Aorta (tissue), 5 donors: ENCODE measurements at regions of chr9 and their contacts with region 1.

Region 1: DNA sequence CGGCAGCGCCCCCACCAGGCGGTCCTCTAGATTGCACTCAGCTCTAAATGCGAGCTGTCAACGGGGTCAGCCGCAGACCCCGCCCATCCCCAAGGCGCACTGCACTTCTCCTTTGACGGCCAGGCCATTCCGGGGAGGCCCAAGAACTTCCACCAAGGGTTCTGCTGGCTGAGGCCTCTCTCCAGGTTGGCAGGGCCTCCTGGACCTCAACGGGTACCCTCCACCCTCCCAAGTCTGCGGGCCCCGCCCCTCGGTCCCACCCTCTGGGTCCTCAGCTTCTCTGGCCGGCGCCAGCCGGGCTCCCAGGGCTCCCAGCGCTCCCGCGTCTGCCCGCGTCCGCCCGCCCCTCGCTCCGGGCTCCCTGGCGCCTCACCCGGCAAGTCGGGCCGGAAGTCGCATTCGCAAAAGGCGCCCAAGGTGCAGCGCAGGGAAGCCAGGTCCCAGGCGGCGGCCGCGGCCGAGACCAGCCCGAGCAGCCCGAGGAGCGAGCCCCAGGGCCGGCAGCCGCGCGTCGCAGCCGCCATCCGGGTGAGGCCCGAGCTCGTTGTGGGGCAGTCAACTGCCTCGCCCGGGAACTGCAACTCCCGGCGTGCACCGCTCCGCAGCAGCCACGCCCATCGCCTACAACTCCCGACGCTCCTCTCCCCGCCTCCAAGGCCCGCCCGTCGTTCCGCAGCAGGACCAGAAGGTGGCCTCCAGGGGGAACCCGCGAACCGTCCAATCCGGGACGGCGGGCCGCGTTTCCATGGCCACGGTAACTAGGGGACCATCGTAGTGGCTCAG is at the start of gene TOR2A:
- DNase-seq: peak; percentile 99 to 100
- ATAC-seq: peak; percentile 96
- H3K4me3 ChIP-seq: peak within 1 kb of the TSS; percentile 49 to 53
- H3K27ac ChIP-seq: peak within 1 kb of the TSS; percentile 25 to 53
- H3K4me1 ChIP-seq: no peaks in the 10 kb centered on the region
- H3K27me3 ChIP-seq: no peaks in the 10 kb centered on the region
- total RNA-seq, gene TOR2A: 5.8 to 8.0 TPM

Region 2: GRCh38 chr9:127503947-127504782 is 230.8 kb before region 1 on chr9:
- intact Hi-C with region 1: loop called in 1 of 2 experiments (anchors 10 kb)
- DNase-seq: peak; percentile 91 to 94
- ATAC-seq: peak; percentile 82
- H3K4me3 ChIP-seq: no peak overlapping the region
- H3K27ac ChIP-seq: peak overlapping the region in 1 of 2 donors; percentile 4
- H3K4me1 ChIP-seq: no peaks in the 10 kb centered on the region
- H3K27me3 ChIP-seq: no peaks in the 10 kb centered on the region

Region 3: DNA sequence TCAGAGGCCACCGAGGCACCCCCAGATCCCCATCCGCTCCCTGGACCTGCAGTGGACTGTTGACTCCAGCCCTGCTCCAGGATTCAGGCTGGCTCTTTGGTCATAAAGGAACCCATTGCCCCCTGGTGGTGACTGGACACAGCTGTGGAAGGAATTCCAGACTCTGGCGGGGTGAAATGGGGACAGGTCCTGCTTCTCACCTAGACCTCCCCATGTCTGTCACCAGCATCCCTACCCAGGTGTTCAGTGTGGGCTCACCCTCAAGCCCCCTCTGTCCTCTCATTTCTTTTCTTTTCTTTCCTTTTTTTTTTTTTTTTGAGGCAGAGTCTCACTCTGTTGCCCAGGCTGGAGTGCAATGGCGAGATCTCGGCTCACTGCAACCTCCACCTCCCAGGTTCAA is 148.4 kb before region 1 on chr9:
- intact Hi-C with region 1: loop called in 1 of 2 experiments (anchors 2 kb)
- DNase-seq: peak; percentile 84 to 88
- ATAC-seq: peak; percentile 87
- H3K4me3 ChIP-seq: no peak overlapping the region
- H3K27ac ChIP-seq: no peak overlapping the region
- H3K4me1 ChIP-seq: no peaks in the 10 kb centered on the region
- H3K27me3 ChIP-seq: no peaks in the 10 kb centered on the region

Region 4: GRCh38 chr9:127785023-127785932 is 50.3 kb after region 1 on chr9:
- intact Hi-C with region 1: loop called (anchors 1 to 2 kb)
- DNase-seq: peak; percentile 92 to 97
- ATAC-seq: peak; percentile 89
- H3K4me3 ChIP-seq: peak overlapping the region; percentile 92 to 97
- H3K27ac ChIP-seq: peak overlapping the region; percentile 60 to 78
- H3K4me1 ChIP-seq: no peaks in the 10 kb centered on the region
- H3K27me3 ChIP-seq: no peaks in the 10 kb centered on the region

Region 5: DNA sequence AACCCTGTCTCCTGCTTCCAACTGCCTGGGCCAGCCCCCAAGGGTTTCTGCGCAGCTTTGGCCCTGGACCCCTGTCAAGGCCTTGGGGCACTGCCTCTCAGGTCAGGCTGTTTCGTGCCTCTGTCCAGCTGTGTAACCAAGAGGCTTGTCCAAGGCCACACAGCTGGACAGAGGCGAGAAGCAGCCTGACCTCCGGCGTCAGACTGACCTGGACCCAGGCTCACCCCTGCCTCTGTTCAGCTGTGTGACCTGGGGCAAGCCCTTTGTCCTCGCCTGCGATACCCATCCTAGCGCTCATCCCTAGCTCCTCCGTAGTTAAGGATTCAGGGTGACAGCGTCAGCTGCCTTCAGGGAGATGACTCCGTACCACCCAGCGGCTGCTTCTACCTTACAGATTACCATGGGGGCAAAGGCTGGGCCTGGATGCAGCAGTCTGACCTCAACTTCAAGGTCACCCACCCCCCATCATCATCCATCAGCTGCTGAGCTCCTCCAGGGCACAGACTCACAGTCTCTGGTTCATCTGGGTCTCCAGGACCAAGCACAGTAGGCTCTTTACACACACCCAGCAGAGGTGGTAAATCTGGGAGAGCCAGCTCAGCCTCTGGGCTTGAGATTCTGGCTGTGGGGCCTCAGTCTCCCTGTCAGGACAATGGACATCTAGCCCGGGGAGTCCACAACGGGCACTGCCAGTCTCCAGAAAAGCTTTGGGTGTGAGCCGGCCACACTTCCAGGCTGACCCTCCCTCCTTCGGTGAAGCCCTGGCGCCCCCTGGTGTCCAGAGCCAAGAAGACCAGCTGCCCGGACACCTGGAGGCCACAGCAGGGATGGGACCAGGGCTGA is 134.6 kb after region 1 on chr9:
- intact Hi-C with region 1: loop called (anchors 1 to 5 kb)
- DNase-seq: peak; percentile 95 to 98
- ATAC-seq: peak; percentile 89
- H3K4me3 ChIP-seq: no peak overlapping the region
- H3K27ac ChIP-seq: peak overlapping the region in 1 of 2 donors; percentile 3
- H3K4me1 ChIP-seq: no peaks in the 10 kb centered on the region
- H3K27me3 ChIP-seq: no peaks in the 10 kb centered on the region

Region 6: GRCh38 chr9:127877566-127877998 is 142.6 kb after region 1 on chr9 and contains the start of gene AK1:
- intact Hi-C with region 1: loop called in 1 of 2 experiments (anchors 2 kb)
- DNase-seq: peak; percentile 88 to 95
- ATAC-seq: peak; percentile 82
- H3K4me3 ChIP-seq: peak within 1 kb of the TSS; percentile 56 to 57
- H3K27ac ChIP-seq: peak within 1 kb of the TSS in 1 of 2 donors; percentile 31
- H3K4me1 ChIP-seq: peaks cover 0 to 2% of the 10 kb centered on the region in 2 donors
- H3K27me3 ChIP-seq: no peaks in the 10 kb centered on the region
- total RNA-seq, gene AK1: 92.4 to 99.5 TPM

Region 7: DNA sequence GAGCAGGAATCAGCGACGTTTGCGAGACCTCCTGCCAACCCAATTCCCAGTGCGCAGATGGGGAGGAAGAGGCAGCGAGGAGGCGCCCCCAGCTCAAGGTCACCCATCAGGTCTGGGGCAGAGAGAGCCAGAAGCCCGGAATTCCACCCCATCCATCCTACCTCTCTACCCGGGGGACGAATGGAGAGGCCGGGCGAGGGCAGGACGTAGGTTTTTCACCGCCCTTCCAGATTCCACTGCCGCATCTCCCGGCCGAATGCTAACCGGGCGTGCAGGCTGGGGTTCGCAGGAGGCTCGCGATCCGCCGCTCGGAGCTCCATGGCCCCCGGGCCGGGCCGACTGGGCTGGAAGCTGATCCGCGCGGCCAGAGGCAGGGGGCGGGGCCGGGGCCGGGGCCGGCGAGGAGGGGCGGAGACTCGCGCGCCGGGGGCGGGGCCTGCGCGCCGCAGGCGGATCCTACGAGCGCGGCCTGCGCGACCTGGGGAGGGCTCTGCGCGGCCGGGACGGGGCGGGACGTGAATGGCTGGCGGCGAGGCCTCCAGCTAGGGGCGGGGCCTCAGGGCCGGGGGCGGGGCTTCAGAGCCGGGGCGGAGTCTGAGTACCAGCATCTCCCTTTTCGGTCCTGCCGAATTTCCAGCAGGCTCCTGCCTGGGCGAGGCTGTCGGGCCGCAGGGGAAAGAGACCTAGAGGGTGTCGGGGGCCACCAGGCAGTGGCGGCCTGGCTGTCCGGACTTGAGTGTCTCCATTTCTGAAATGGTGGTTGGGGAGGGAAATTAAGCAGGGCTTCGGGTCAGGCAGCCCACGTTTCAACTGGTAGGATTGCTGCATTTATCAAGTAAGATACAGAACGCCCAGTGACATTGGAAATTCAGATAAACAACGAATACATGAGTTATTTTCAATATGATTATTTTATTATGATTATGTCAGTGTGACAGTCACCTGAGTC is 182.0 kb after region 1 on chr9 and contains the start of gene ST6GALNAC4:
- intact Hi-C with region 1: loop called (anchors 1 to 5 kb)
- DNase-seq: peak; percentile 96 to 98
- ATAC-seq: peak; percentile 93
- H3K4me3 ChIP-seq: peak within 1 kb of the TSS; percentile 44 to 72
- H3K27ac ChIP-seq: peak within 1 kb of the TSS in 1 of 2 donors; percentile 26
- H3K4me1 ChIP-seq: no peaks in the 10 kb centered on the region
- H3K27me3 ChIP-seq: no peaks in the 10 kb centered on the region
- total RNA-seq, gene ST6GALNAC4: 34.9 to 46.5 TPM